ENCODE measurements at regions of chr11 and their contacts with region 1.

Region 1: GRCh38 chr11:15649371-15650104 is 534.8 kb downstream of the INSC start:
- DNase-seq: no peak
- H3K4me3 ChIP-seq: no peak overlapping the region
- H3K27ac ChIP-seq: peak overlapping the region in 1 of 2 donors; percentile 62
- H3K4me1 ChIP-seq: peaks cover 0 to 15% (median 3%) of the 10 kb centered on the region in 3 donors
- H3K27me3 ChIP-seq: no peaks in the 10 kb centered on the region
- CTCF ChIP-seq: no peak

Region 2: DNA sequence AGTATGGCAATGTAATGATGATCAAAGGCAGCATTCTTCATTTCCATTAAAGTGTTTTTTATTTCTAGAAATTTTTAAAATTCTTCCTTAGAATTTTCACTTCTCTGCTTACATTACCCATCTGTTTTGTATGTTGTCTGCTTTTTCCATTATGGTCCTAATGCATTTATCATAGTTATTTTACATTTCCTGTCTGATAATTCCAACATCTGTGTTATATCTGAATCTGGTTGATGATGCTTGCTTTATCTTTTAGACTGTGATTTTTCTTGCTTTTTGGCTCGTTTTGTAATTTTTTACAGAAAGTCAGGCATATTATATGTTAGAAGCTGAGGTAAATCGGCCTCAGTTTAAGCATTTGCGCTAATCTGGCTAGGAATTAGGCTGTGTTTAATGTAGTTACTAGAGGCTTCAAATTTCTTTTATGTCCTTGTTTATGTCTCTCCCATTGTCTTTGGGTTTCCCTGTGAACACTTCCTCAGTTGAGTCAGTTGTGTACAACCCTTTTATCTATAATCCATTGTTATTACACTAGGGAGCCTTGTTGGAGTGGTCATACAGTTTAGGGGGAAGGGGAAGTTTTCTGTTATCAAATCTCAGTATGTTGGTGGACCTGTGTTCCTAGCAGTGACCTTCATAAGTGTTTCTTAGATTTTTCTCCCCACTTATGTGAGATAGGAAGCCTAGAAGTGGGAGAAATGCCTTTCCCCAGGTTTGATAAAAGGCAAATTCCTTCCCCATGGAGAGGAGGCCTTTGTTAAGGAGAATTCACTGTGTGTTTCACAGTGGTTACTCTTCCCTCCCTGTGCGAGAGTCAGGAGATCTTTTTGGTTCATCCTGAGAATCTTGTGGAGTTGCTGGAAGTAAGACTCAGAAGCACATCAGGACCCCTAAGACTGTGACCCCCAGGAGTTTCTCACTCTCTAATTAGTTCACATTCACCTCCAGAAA is 97.4 kb before region 1 on chr11:
- intact Hi-C with region 1: no loop called
- DNase-seq: no peak
- H3K4me3 ChIP-seq: no peak overlapping the region
- H3K27ac ChIP-seq: no peak overlapping the region
- H3K4me1 ChIP-seq: no peaks in the 10 kb centered on the region
- H3K27me3 ChIP-seq: no peaks in the 10 kb centered on the region
- CTCF ChIP-seq: no peak

Region 3: DNA sequence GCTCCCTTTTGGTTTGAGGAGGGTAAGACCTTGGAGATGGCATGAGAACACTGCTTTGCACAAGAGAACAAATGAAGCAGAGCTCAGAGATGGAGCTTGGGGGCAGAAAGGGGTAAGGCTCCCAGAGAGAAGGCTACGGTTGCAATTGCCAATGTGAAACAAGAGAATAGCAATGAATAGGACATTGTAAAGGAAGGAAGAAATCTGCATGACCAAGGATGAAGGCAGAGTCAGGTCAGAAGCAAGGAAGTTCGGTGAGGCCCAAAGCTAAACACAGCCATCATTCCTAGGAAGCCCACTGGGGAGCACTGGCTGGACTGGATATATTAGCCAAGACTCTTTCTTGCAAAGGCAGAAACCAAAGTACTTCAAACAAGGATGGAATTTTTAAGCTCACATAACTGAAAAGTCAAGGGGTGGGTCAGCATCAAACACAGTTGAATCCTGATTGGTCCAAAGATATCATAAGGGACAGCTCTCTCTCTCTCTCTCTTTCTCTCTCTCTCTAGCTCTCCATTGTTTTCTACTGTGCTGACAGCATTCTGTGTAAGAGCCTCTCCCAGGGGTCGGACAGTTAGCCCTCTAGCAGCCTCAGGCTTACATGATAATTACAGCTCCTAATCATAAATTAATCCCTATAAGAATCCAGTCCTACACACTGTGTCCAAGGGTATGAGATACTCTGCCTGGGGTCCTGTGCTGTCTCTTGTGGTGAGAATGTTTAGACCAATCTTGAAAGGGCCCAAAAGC is 222.5 kb after region 1 on chr11:
- intact Hi-C with region 1: no loop called
- DNase-seq: no peak
- H3K4me3 ChIP-seq: no peak overlapping the region
- H3K27ac ChIP-seq: no peak overlapping the region
- H3K4me1 ChIP-seq: no peaks in the 10 kb centered on the region
- H3K27me3 ChIP-seq: no peaks in the 10 kb centered on the region
- CTCF ChIP-seq: no peak

Region 4: DNA sequence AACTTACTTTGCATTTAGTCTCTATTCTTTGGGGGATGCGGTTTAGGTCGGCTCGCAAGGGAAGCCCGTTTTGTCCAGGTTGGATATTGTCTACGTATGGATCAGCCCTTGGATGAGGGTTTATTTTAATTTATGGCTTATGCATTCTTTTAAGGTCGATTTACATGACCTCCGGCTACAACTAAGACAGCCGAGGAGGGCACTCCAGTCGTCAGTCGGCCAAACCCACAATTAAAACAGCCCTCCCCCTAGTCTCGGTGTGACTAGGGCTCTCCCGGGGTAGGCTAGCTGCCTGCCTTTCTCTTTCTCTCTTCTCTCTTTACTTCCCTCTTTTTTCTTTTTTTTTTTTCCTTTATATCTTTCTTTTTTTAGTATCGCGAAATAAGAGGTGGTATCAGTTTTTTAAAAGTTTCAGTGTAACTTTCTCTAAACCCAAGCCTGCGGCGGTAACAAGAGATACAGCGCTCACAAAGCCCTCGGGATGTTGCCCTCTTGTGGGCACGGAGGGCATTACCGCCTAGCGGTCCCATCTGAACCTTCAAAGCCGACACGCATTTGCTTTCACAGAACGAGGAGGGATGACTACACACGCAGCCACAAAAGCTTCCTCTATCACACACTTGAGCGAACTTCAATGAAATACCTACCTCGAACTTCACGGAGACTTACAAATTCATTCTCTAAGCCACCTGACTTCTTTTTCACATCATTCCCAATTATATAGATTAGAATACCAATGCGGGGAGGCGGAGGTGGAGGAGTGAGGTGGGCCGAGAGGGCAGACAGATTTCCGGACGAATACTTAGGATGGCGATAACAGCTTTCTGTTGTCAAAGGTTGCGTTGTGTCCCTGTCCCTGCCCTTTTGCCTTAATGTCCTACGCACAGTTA is 956.6 kb after region 1 on chr11:
- intact Hi-C with region 1: loop called (anchors 10 kb)
- DNase-seq: peak; percentile 92 to 97 (median 94)
- H3K4me3 ChIP-seq: peak overlapping the region; percentile 67 to 93 (median 92)
- H3K27ac ChIP-seq: peak overlapping the region; percentile 88 to 95
- H3K4me1 ChIP-seq: peaks cover 0 to 2% (median 0%) of the 10 kb centered on the region in 3 donors
- H3K27me3 ChIP-seq: peaks cover 20% of the 10 kb centered on the region
- CTCF ChIP-seq: peak; percentile 86